Lower lobe of right lung (tissue), 2 donors: ENCODE measurements at regions of chr16 and their contacts with region 1.

Region 1: DNA sequence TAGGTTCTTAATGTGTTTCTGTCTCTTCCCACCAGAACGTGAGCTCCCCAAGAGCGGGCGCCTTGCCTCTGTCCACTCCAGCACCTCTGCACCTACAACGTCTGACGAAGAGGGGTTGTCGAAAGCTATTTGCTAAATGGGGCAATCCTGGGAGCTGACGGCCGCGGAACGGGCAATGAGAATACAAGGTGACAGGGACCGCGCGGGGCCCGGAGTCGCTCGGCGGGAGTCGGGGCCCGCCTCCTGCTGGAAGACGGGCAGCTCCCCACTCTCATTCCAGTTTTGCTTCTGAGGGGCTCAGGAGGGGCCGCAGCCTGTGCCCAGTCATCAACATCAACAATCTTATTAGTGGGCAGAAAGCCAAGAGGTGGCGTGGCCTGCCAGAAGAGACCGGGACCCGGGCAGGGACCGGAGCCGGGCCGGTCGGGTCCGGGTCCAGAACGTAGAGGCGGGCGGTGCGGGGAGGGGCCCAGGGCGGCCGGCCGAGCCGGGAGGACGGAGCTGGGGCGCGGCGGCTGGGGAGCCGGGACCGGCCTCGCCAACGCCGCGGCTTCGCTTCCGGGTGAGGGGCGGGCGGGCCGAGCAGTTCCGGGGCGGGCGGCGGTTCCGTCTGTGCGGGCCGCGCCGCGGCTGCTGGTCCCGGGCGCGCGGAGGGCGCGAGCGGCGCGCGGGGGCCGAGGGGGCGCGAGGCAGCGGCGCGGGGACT is at the start of gene MOSMO:
- DNase-seq: peak; percentile 82
- ATAC-seq: peak; percentile 93 to 96
- H3K4me3 ChIP-seq: peak within 1 kb of the TSS; percentile 91
- H3K27ac ChIP-seq: peak within 1 kb of the TSS; percentile 83
- H3K4me1 ChIP-seq: peaks cover 34% of the 10 kb centered on the region
- H3K27me3 ChIP-seq: no peaks in the 10 kb centered on the region
- CTCF ChIP-seq: no peak
- total RNA-seq, gene MOSMO: 15.4 TPM

Region 2: DNA sequence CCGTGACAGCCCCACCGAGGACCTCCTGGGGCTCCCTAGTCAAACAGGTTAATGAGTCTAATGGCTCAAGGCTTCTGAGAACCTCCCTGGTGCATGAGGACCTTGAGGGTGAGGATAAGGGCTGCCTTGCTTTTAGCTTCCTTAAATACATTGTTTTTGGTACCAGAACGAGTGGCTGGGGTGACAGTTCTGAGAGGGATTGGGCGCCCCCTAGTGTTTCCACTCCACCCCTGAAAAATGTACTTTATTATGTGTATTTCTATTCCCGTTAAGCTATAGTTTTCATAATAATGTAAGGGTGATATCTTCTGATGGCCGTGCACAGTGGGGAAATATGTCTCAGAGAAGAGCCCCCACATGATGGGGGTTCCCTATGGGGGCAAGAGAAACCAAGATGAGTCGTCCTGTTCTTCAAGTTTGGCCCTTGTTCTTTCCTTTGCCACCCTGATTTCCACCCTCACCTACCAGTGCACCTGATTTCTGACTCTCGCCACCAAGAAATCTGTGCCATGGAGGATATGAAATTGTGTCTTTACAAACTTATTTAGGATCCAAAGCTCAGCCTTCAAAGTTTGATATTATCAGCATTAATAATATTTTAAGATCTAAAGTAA is 70.1 kb after region 1 on chr16:
- intact Hi-C with region 1: loop called (anchors 10 kb)
- DNase-seq: no peak
- ATAC-seq: peak; percentile 59 to 80
- H3K4me3 ChIP-seq: no peak overlapping the region
- H3K27ac ChIP-seq: no peak overlapping the region
- H3K4me1 ChIP-seq: no peaks in the 10 kb centered on the region
- H3K27me3 ChIP-seq: no peaks in the 10 kb centered on the region
- CTCF ChIP-seq: peak; percentile 80